ENCODE measurements at regions of chr5 and their contacts with region 1.

Region 1: GRCh38 chr5:142108432-142109330 is at the start of gene NDFIP1:
- DNase-seq: peak; percentile 90 to 97 (median 96)
- ATAC-seq: peak; percentile 98 to 99
- H3K4me3 ChIP-seq: peak within 1 kb of the TSS; percentile 82
- H3K27ac ChIP-seq: peak within 1 kb of the TSS; percentile 98
- H3K4me1 ChIP-seq: no peaks in the 10 kb centered on the region
- H3K27me3 ChIP-seq: no peaks in the 10 kb centered on the region
- total RNA-seq, gene NDFIP1: 67.9 to 74.5 (median 68.3) TPM

Region 2: GRCh38 chr5:142024771-142025304 is 83.8 kb before region 1 on chr5:
- intact Hi-C with region 1: loop called in 1 of 4 experiments (anchors 5 kb)
- DNase-seq: peak; percentile 91 to 96 (median 95)
- ATAC-seq: peak; percentile 99
- H3K4me3 ChIP-seq: peak overlapping the region; percentile 61
- H3K27ac ChIP-seq: peak overlapping the region; percentile 95
- H3K4me1 ChIP-seq: no peaks in the 10 kb centered on the region
- H3K27me3 ChIP-seq: no peaks in the 10 kb centered on the region

Measured in right cardiac atrium (tissue), 5 donors.